Breast epithelium (tissue), 4 donors: ENCODE measurements at regions of chr2 and their contacts with region 1.

Region 1: DNA sequence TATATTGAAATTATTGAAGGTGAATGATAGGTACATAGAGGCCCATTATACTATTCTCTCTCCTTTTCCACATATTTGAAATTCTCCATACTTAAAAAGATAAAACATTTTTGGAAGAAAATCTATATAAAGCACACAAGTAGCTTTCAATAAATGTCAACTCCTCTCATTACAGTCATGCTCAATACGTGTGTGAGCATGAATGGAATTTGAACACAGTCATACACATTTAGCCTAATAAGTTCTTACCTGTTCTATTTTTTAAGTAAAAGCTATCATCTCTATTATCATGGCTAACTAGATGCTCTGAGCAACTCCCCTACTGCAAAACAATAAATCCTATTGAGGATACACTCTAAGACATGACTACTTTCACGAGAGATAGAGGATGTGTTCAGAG is 41.9 kb upstream of the SPATS2L start:
- DNase-seq: no peak
- H3K4me3 ChIP-seq: no peak overlapping the region
- H3K27ac ChIP-seq: no peak overlapping the region
- H3K4me1 ChIP-seq: no peaks in the 10 kb centered on the region
- H3K27me3 ChIP-seq: no peaks in the 10 kb centered on the region
- CTCF ChIP-seq: no peak
- POLR2A ChIP-seq: no peak

Region 2: GRCh38 chr2:199144036-199144435 is 1120.6 kb before region 1 on chr2:
- intact Hi-C with region 1: loop called (anchors 5 kb)
- DNase-seq: no peak
- H3K4me3 ChIP-seq: no peak overlapping the region
- H3K27ac ChIP-seq: no peak overlapping the region
- H3K4me1 ChIP-seq: no peaks in the 10 kb centered on the region
- H3K27me3 ChIP-seq: no peaks in the 10 kb centered on the region
- CTCF ChIP-seq: no peak
- POLR2A ChIP-seq: no peak

Region 3: GRCh38 chr2:199395311-199395710 is 869.3 kb before region 1 on chr2:
- intact Hi-C with region 1: no loop called
- DNase-seq: no peak
- H3K4me3 ChIP-seq: no peak overlapping the region
- H3K27ac ChIP-seq: no peak overlapping the region
- H3K4me1 ChIP-seq: no peaks in the 10 kb centered on the region
- H3K27me3 ChIP-seq: no peaks in the 10 kb centered on the region
- CTCF ChIP-seq: no peak
- POLR2A ChIP-seq: no peak

Region 4: DNA sequence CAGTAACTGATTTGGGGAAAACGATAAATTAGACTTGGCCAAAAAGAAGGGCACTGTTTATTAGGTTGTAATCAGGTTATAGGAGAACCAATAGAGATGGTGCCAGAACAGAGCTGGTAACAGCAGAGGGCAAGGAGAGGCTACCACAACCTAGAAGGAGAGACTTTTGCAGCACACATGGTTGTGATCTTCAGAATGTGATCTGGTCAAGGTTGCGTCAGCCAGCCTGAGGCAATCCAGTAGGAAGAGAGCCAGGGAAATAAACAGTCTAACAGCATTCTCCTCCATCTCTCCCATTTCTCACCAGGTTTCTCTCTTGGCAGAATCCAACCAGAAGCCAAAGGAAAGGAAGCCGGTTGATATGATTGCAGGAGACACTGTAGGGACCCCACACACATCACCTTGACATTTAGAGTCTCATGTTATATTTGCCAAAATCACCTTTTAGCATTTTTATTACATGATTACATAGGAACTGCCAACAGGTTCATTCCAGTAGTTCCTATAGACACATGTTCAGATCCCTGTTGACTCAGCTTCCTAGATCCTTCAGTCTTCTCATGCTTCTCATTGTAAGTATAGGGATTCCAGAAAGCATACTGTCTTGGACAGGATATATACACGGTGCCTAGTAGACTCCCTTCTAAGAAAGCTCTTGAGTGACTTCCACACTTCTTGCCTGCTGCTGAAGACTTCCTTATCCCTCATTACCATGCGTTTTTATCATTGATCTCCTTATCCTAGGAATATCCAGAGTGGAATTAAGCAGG is 24.2 kb after region 1 on chr2:
- intact Hi-C with region 1: loop called (anchors 1 kb)
- DNase-seq: peak; percentile 45 to 63
- H3K4me3 ChIP-seq: no peak overlapping the region
- H3K27ac ChIP-seq: peak overlapping the region; percentile 3 to 20
- H3K4me1 ChIP-seq: no peaks in the 10 kb centered on the region
- H3K27me3 ChIP-seq: no peaks in the 10 kb centered on the region
- CTCF ChIP-seq: no peak
- POLR2A ChIP-seq: no peak